WTC11 (cell line): ENCODE measurements at regions of chr7 and their contacts with region 1.

Region 1: GRCh38 chr7:28078036-28078901 is 102.3 kb downstream of the JAZF1 start:
- DNase-seq: peak; percentile 33
- ATAC-seq: no peak
- H3K4me3 Mint-ChIP-seq: no peak overlapping the region
- H3K27ac Mint-ChIP-seq: no peak overlapping the region
- H3K4me1 Mint-ChIP-seq: peaks cover 30% of the 10 kb centered on the region
- H3K27me3 Mint-ChIP-seq: no peaks in the 10 kb centered on the region
- CTCF ChIP-seq: peak; percentile 96

Region 2: GRCh38 chr7:27947586-27948278 is 130.5 kb before region 1 on chr7:
- CTCF ChIA-PET with region 1: no interaction called
- POLR2A ChIA-PET with region 1: no interaction called
- DNase-seq: no peak
- ATAC-seq: no peak
- H3K4me3 Mint-ChIP-seq: no peak overlapping the region
- H3K27ac Mint-ChIP-seq: no peak overlapping the region
- H3K4me1 Mint-ChIP-seq: peaks cover 9% of the 10 kb centered on the region; the same call in 1 of the 2 replicates
- H3K27me3 Mint-ChIP-seq: no peaks in the 10 kb centered on the region
- CTCF ChIP-seq: no peak

Region 3: GRCh38 chr7:28037220-28038010 is 40.9 kb before region 1 on chr7:
- CTCF ChIA-PET with region 1: interaction called, 10 read pairs
- POLR2A ChIA-PET with region 1: no interaction called
- DNase-seq: no peak
- ATAC-seq: no peak
- H3K4me3 Mint-ChIP-seq: no peak overlapping the region
- H3K27ac Mint-ChIP-seq: no peak overlapping the region
- H3K4me1 Mint-ChIP-seq: peaks cover 32% of the 10 kb centered on the region
- H3K27me3 Mint-ChIP-seq: no peaks in the 10 kb centered on the region; the same call in 1 of the 2 replicates
- CTCF ChIP-seq: no peak